Aorta (tissue), 5 donors: ENCODE measurements at regions of chr2 and their contacts with region 1.

Region 1: GRCh38 chr2:106812383-106812782 is 73.6 kb downstream of the ST6GAL2 start:
- DNase-seq: peak in 1 of 2 donors; percentile 63
- ATAC-seq: peak; percentile 76
- H3K4me3 ChIP-seq: no peak overlapping the region
- H3K27ac ChIP-seq: peak overlapping the region; percentile 65 to 78
- H3K4me1 ChIP-seq: peaks cover 4 to 13% of the 10 kb centered on the region in 2 donors
- H3K27me3 ChIP-seq: no peaks in the 10 kb centered on the region

Region 2: DNA sequence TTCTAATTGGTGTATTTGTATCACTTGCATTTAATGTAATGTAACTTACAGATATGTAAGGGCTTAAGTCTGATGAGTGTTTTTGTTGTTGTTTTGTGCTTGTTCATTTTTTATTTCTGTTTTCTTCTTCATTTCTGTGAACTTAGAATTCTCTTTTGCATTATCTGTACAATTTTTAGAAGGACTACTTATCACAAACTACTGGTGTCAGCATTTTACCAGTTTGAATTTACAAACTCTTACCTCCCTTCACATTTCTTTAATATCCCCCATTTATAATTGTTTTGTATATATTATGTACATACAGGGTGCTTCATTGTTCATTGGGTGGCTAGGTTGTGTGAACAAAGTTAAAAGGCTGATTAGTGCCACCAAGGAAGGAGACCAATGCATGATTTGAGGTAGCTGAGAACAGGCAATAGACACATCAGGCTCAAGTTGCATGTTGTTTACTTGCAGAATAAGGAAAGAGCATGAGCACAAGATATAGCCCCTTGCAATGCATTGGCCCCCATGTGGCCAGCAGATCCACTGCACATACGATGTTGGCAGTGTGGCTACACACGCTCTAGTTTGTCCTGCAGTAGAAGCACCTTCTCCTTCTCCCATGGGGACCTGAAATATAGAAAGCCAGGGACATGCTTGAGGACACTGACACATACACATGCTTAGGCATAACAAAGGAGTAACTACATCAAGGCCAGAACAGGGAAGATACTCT is 127.0 kb before region 1 on chr2:
- intact Hi-C with region 1: no loop called
- DNase-seq: no peak
- ATAC-seq: no peak
- H3K4me3 ChIP-seq: no peak overlapping the region
- H3K27ac ChIP-seq: no peak overlapping the region
- H3K4me1 ChIP-seq: no peaks in the 10 kb centered on the region
- H3K27me3 ChIP-seq: no peaks in the 10 kb centered on the region

Region 3: DNA sequence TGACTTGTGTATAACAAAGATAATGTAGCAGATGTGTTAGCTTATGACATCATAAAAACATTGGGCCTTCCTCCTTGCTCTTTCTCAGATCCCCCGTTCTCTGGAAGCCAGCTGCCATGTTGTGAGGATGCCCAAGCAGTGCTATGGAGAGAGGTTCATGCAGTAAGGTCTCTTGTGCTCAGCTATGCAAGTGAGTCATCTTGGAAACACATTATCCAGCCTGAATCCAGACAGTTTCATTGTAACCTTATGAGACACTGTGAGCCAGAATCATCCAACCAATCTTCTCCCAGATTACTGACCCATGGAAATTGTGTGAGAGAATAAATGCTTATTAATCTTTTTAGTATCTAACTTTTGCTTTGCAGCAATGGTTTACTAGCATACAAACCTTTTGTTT is 12.8 kb after region 1 on chr2:
- intact Hi-C with region 1: no loop called
- DNase-seq: no peak
- ATAC-seq: no peak
- H3K4me3 ChIP-seq: no peak overlapping the region
- H3K27ac ChIP-seq: peak overlapping the region in 1 of 2 donors; percentile 38
- H3K4me1 ChIP-seq: no peaks in the 10 kb centered on the region
- H3K27me3 ChIP-seq: no peaks in the 10 kb centered on the region

Region 4: GRCh38 chr2:106851087-106851874 is 38.9 kb after region 1 on chr2:
- intact Hi-C with region 1: loop called in 1 of 2 experiments (anchors 5 kb)
- DNase-seq: no peak
- ATAC-seq: peak; percentile 70
- H3K4me3 ChIP-seq: peak overlapping the region in 1 of 2 donors; percentile 69
- H3K27ac ChIP-seq: peak overlapping the region; percentile 80 to 93
- H3K4me1 ChIP-seq: peaks cover 6 to 18% of the 10 kb centered on the region in 2 donors
- H3K27me3 ChIP-seq: no peaks in the 10 kb centered on the region

Region 5: GRCh38 chr2:106868275-106868674 is 55.9 kb after region 1 on chr2:
- intact Hi-C with region 1: loop called (anchors 5 to 10 kb)
- DNase-seq: no peak
- ATAC-seq: peak; percentile 57
- H3K4me3 ChIP-seq: peak overlapping the region in 1 of 2 donors; percentile 26
- H3K27ac ChIP-seq: peak overlapping the region; percentile 66 to 97
- H3K4me1 ChIP-seq: peaks cover 3 to 11% of the 10 kb centered on the region in 2 donors
- H3K27me3 ChIP-seq: no peaks in the 10 kb centered on the region

Region 6: GRCh38 chr2:107337209-107337898 is 525.0 kb after region 1 on chr2:
- intact Hi-C with region 1: loop called in 1 of 2 experiments (anchors 10 kb)
- DNase-seq: no peak
- ATAC-seq: peak; percentile 84
- H3K4me3 ChIP-seq: no peak overlapping the region
- H3K27ac ChIP-seq: peak overlapping the region in 1 of 2 donors; percentile 84
- H3K4me1 ChIP-seq: peaks cover 3% of the 10 kb centered on the region in 2 donors
- H3K27me3 ChIP-seq: no peaks in the 10 kb centered on the region

Region 7: GRCh38 chr2:107648781-107649404 is 836.5 kb after region 1 on chr2:
- intact Hi-C with region 1: no loop called
- DNase-seq: no peak
- ATAC-seq: no peak
- H3K4me3 ChIP-seq: no peak overlapping the region
- H3K27ac ChIP-seq: no peak overlapping the region
- H3K4me1 ChIP-seq: no peaks in the 10 kb centered on the region
- H3K27me3 ChIP-seq: no peaks in the 10 kb centered on the region